Activated B cell treated with CpG ODN at 0.5 μM for 24 hours (primary cell): ENCODE measurements at regions of chr15 and their contacts with region 1.

Region 1: DNA sequence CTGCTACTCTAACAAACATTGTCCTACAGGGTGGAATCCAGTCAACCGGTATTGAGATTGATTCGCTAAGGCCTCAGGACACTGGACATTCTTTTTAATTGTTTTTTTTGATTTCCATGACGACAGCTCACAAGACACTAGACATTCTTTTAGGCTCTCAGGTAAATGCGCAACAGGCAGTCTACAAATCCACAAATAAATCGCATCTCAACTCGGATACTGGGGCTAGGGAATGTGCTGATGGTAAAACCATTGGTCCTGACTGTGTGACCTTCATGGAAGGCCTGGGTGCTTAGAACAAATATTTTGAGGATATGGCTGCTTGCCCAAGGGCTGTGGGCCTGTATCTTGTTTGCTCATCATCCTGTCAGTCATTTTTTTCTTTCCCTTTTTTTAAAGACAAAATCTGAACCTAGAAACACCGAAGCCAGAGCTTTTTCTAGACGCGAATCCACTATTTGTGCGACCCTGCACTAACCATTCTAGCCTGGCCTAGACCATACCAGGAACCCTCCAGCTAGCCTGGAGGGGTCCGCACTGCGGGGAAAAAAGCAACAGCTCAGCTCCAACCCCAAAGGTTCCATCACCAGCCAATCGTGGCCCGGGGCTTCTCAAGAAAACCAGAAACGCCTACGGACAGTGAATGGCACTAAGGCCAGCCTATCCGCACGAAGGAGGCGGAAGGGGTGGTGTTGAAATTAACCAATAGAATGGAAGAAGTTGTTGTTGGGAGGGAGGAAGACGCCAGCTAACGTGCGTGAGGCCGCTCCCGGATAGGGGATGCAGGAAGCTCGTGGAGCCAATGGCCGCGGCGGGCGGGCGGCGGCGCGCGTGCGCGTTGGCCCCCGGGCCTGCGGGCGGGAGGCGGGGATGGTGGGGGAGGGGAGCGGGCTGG is 18.1 kb upstream of the CHD2 start:
- DNase-seq: peak; percentile 91
- ATAC-seq: peak; percentile 90
- H3K4me3 Mint-ChIP-seq: peak overlapping the region; percentile 88
- H3K27ac Mint-ChIP-seq: peak overlapping the region; percentile 99
- H3K4me1 Mint-ChIP-seq: peaks cover 46% of the 10 kb centered on the region
- H3K27me3 Mint-ChIP-seq: no peaks in the 10 kb centered on the region
- CTCF ChIP-seq: no peak

Region 2: DNA sequence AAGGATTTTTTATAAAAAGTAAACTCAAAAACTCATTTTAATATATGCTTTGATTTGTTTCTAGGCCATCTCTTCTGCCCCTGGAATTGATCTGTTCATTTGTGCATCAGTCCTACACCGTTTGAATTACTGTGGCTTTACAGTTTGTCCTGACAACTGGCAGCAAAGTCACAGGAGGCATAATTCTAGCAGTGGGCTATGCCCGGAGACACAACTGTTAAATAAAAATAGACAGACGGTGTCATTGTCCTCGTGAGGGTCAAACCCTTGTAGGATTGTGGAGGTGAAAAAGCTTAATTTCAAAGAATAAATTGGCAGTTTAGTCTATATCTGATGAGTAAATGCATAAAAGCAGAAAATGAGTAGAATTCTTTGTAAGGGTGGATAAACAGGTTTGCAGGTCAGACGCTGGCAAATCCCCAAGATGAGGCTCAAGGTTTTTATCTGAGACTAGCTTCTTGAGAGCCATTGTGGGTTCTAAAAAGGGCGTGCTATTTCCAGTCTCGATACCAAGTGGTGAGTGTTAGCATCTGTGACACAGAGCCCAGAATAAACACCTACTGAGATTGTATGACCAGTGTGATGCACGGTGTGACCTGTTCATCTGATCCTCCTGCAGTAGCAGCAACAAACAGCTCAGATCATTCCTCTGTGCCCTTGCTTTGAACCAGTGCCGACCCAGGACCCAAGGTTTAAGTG is 1080.1 kb before region 1 on chr15:
- CTCF ChIA-PET with region 1: no interaction called
- POLR2A ChIA-PET with region 1: no interaction called
- intact Hi-C with region 1: no loop called
- DNase-seq: no peak
- ATAC-seq: no peak
- H3K4me3 Mint-ChIP-seq: no peak overlapping the region
- H3K27ac Mint-ChIP-seq: no peak overlapping the region
- H3K4me1 Mint-ChIP-seq: no peaks in the 10 kb centered on the region
- H3K27me3 Mint-ChIP-seq: peaks cover 4% of the 10 kb centered on the region
- CTCF ChIP-seq: no peak

Region 3: GRCh38 chr15:92797168-92797951 is 84.7 kb before region 1 on chr15:
- CTCF ChIA-PET with region 1: interaction called, 6 read pairs
- POLR2A ChIA-PET with region 1: interaction called, 13 read pairs
- intact Hi-C with region 1: no loop called
- DNase-seq: no peak
- ATAC-seq: peak; percentile 84
- H3K4me3 Mint-ChIP-seq: no peak overlapping the region
- H3K27ac Mint-ChIP-seq: peak overlapping the region; percentile 68
- H3K4me1 Mint-ChIP-seq: peaks cover 6% of the 10 kb centered on the region
- H3K27me3 Mint-ChIP-seq: no peaks in the 10 kb centered on the region
- CTCF ChIP-seq: peak; percentile 22

Region 4: GRCh38 chr15:92831655-92832328 is 50.3 kb before region 1 on chr15:
- CTCF ChIA-PET with region 1: interaction called, 17 read pairs
- POLR2A ChIA-PET with region 1: interaction called, 416 read pairs
- intact Hi-C with region 1: loop called (anchors 1 kb)
- DNase-seq: peak; percentile 86
- ATAC-seq: peak; percentile 93
- H3K4me3 Mint-ChIP-seq: peak overlapping the region; percentile 80
- H3K27ac Mint-ChIP-seq: peak overlapping the region; percentile 96
- H3K4me1 Mint-ChIP-seq: peaks cover 58% of the 10 kb centered on the region
- H3K27me3 Mint-ChIP-seq: no peaks in the 10 kb centered on the region
- CTCF ChIP-seq: no peak

Region 5: GRCh38 chr15:92845126-92845508 is 36.9 kb before region 1 on chr15:
- CTCF ChIA-PET with region 1: interaction called, 5 read pairs
- POLR2A ChIA-PET with region 1: interaction called, 152 read pairs
- intact Hi-C with region 1: loop called (anchors 1 kb)
- DNase-seq: no peak
- ATAC-seq: peak; percentile 50
- H3K4me3 Mint-ChIP-seq: peak overlapping the region; percentile 73
- H3K27ac Mint-ChIP-seq: peak overlapping the region; percentile 95
- H3K4me1 Mint-ChIP-seq: peaks cover 71% of the 10 kb centered on the region
- H3K27me3 Mint-ChIP-seq: no peaks in the 10 kb centered on the region
- CTCF ChIP-seq: no peak

Region 6: DNA sequence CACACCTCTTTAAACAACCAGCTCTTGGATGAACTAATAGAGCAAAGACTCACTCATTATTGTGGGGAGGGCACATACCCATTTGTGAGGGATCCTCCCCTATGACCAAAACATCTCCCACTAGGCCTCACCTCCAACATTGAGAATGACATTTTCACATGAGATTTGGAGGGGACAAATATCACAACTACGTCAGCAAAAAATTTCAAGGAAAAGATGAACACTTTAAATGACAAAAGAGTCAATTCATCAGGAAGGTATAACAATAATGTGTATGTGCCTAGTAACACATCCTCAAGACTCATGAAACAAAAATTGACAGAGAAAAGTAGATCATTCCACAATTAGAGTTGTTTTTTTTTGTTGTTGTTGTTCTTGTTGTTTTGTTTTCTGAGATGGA is 20.3 kb before region 1 on chr15:
- CTCF ChIA-PET with region 1: no interaction called
- POLR2A ChIA-PET with region 1: interaction called, 11 read pairs
- intact Hi-C with region 1: no loop called
- DNase-seq: no peak
- ATAC-seq: no peak
- H3K4me3 Mint-ChIP-seq: no peak overlapping the region
- H3K27ac Mint-ChIP-seq: no peak overlapping the region
- H3K4me1 Mint-ChIP-seq: no peaks in the 10 kb centered on the region
- H3K27me3 Mint-ChIP-seq: no peaks in the 10 kb centered on the region
- CTCF ChIP-seq: no peak